ENCODE measurements at regions of chr11 and their contacts with region 1.

Region 1: DNA sequence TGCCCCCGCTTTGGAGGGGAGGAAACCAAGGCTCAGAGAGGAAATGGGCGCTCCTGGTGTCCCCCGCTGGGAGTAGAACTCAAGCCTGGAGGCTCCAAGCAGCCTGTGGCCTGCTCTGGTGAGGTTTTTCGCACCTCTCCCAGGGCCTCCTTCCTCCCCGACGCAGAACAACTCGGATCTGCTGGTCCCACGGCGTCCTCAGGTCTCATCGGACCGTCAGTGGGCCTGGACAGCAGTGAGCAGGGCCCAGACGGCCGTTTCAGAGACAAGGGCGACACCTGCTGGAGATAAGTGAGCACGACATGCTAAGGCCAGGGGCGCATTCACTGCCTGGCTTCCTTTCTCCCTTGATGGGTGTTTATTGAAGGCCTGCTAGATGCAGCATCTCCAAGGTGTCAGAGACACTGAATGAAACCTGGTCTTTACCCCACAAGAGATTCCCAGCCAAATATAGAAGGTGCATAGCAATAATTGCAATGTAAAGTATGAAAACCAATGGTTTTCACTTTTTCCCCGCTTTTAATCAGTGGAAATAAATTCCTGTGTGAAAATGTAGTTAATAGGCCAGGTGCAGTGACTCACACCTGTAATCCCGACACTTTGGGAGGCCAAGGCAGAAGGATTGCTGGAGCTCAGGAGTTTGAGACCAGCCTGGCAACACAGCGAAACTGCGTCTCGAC is 26.9 kb upstream of the CD82 start:
- DNase-seq: peak; percentile 51 to 72 (median 65)
- H3K4me3 ChIP-seq: no peak overlapping the region
- H3K27ac ChIP-seq: no peak overlapping the region
- H3K4me1 ChIP-seq: peaks cover 0 to 2% (median 0%) of the 10 kb centered on the region in 4 experiments
- H3K27me3 ChIP-seq: peaks cover 0 to 5% (median 0%) of the 10 kb centered on the region in 5 experiments

Region 2: DNA sequence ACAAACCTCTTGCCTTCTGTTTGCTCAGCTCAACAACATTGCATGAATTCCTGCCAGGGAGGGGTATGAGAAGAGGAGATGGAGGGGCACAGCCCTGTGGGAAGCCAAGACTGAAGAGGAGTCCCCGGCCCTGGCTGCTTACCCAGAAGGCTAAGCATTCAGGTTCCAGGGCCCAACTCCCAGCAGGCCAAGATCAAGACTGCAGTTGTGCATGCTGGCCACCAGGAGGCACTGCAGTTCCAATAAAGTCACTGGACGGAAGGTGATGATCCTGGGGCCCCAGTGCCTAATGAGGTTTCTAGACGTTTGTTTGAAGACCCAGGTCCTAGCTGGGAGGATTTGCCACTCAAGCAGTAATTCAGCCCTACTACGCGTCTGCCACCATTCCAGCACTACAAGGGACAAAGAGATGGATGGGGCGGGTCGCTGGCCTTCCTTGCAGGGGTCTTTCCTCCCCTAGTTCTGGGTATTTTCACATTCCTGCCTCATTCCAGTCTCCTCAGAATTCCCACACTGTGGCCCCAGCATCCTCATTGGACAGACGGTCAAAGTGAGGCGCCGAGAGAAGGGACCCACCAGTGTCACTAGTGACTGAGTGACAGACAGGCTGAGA is 252.1 kb before region 1 on chr11:
- CTCF ChIA-PET with region 1: interaction called, 24 read pairs
- POLR2A ChIA-PET with region 1: no interaction called
- DNase-seq: peak; percentile 68 to 77 (median 71)
- H3K4me3 ChIP-seq: no peak overlapping the region
- H3K27ac ChIP-seq: no peak overlapping the region
- H3K4me1 ChIP-seq: no peaks in the 10 kb centered on the region
- H3K27me3 ChIP-seq: peaks cover 0 to 18% (median 6%) of the 10 kb centered on the region in 5 experiments

Region 3: GRCh38 chr11:44483919-44484610 is 54.5 kb before region 1 on chr11:
- CTCF ChIA-PET with region 1: no interaction called
- POLR2A ChIA-PET with region 1: no interaction called
- DNase-seq: peak in 1 of 3 donors; percentile 7
- H3K4me3 ChIP-seq: no peak overlapping the region
- H3K27ac ChIP-seq: no peak overlapping the region
- H3K4me1 ChIP-seq: no peaks in the 10 kb centered on the region
- H3K27me3 ChIP-seq: no peaks in the 10 kb centered on the region

Region 4: DNA sequence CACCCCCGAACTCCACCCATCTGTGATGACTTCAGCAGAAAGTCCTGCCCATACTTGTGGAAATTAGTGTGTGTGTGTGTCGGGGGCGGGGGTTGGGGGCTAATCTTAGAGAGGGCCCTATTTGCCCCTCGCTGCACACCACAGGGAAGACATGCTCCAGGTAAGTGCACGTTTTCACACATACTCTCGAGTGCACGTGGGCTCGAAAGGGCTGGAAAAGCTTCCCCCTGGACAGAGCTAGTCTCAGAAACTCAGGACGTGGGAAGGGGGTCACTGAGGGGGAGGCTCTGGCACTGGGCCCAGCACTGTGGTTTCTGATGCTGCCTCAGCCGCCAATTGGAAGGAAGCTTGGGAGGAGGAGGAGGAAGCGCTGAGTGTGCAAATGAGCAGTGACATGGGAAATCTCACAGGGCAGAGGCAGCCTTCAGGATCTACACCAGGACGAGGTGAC is 13.7 kb before region 1 on chr11:
- CTCF ChIA-PET with region 1: interaction called, 53 read pairs
- POLR2A ChIA-PET with region 1: no interaction called
- DNase-seq: peak in 2 of 3 donors; percentile 19 to 31
- H3K4me3 ChIP-seq: no peak overlapping the region
- H3K27ac ChIP-seq: no peak overlapping the region
- H3K4me1 ChIP-seq: peaks cover 0 to 19% (median 14%) of the 10 kb centered on the region in 4 experiments
- H3K27me3 ChIP-seq: peaks cover 0 to 31% (median 3%) of the 10 kb centered on the region in 5 experiments

Region 5: GRCh38 chr11:44793350-44794090 is 255.0 kb after region 1 on chr11:
- CTCF ChIA-PET with region 1: no interaction called
- POLR2A ChIA-PET with region 1: no interaction called
- DNase-seq: peak; percentile 59 to 80 (median 75)
- H3K4me3 ChIP-seq: no peak overlapping the region
- H3K27ac ChIP-seq: no peak overlapping the region
- H3K4me1 ChIP-seq: peaks cover 4 to 14% (median 6%) of the 10 kb centered on the region in 4 experiments
- H3K27me3 ChIP-seq: peaks cover 0 to 7% (median 0%) of the 10 kb centered on the region in 5 experiments